ENCODE measurements at regions of chr19 and their contacts with region 1.

Region 1: GRCh38 chr19:3783660-3784584 is 2.3 kb downstream of the MATK start:
- DNase-seq: peak in 8 of 9 experiments; percentile 25 to 75 (median 64)
- ATAC-seq: peak; percentile 58
- H3K4me3 ChIP-seq: peak overlapping the region in 1 of 2 experiments; percentile 69
- H3K4me3 Mint-ChIP-seq: peak overlapping the region; percentile 83
- H3K27ac ChIP-seq: peak overlapping the region in 1 of 2 experiments; percentile 48
- H3K27ac Mint-ChIP-seq: peak overlapping the region; percentile 79
- H3K4me1 ChIP-seq: peaks cover 15% of the 10 kb centered on the region
- H3K4me1 Mint-ChIP-seq: peaks cover 22% of the 10 kb centered on the region
- H3K27me3 ChIP-seq: no peaks in the 10 kb centered on the region
- H3K27me3 Mint-ChIP-seq: no peaks in the 10 kb centered on the region
- CTCF ChIP-seq: peak; percentile 50

Region 2: GRCh38 chr19:3801412-3802096 is 17.6 kb after region 1 on chr19:
- CTCF ChIA-PET with region 1: interaction called, 4 read pairs
- POLR2A ChIA-PET with region 1: interaction called, 5 read pairs
- intact Hi-C with region 1: loop called in 1 of 2 experiments (anchors 2 kb)
- DNase-seq: peak; percentile 38 to 84 (median 66)
- ATAC-seq: peak; percentile 69
- H3K4me3 ChIP-seq: peak overlapping the region; percentile 39 to 60
- H3K4me3 Mint-ChIP-seq: peak overlapping the region; percentile 56
- H3K27ac ChIP-seq: no peak overlapping the region
- H3K27ac Mint-ChIP-seq: peak overlapping the region; percentile 22
- H3K4me1 ChIP-seq: peaks cover 49% of the 10 kb centered on the region
- H3K4me1 Mint-ChIP-seq: peaks cover 43% of the 10 kb centered on the region
- H3K27me3 ChIP-seq: no peaks in the 10 kb centered on the region
- H3K27me3 Mint-ChIP-seq: no peaks in the 10 kb centered on the region
- CTCF ChIP-seq: no peak

Region 3: GRCh38 chr19:4123615-4124568 is 340.0 kb after region 1 on chr19 and contains the start of gene MAP2K2:
- CTCF ChIA-PET with region 1: no interaction called
- POLR2A ChIA-PET with region 1: no interaction called
- intact Hi-C with region 1: no loop called
- DNase-seq: peak; percentile 91 to 98 (median 97)
- ATAC-seq: peak; percentile 96
- H3K4me3 ChIP-seq: peak within 1 kb of the TSS; percentile 57 to 72
- H3K4me3 Mint-ChIP-seq: peak within 1 kb of the TSS; percentile 93
- H3K27ac ChIP-seq: peak within 1 kb of the TSS; percentile 52 to 73
- H3K27ac Mint-ChIP-seq: peak within 1 kb of the TSS; percentile 91
- H3K4me1 ChIP-seq: peaks cover 17% of the 10 kb centered on the region
- H3K4me1 Mint-ChIP-seq: peaks cover 25% of the 10 kb centered on the region
- H3K27me3 ChIP-seq: no peaks in the 10 kb centered on the region
- H3K27me3 Mint-ChIP-seq: no peaks in the 10 kb centered on the region
- CTCF ChIP-seq: no peak
- total RNA-seq, gene MAP2K2: 73.9 to 76.8 TPM

Measured in CD8-positive, alpha-beta T cell (primary cell).